PC-3 (cell line): ENCODE measurements at regions of chr2 and their contacts with region 1.

Region 1: GRCh38 chr2:107657049-107657448 is 169.6 kb upstream of the RGPD4 start:
- DNase-seq: no peak
- ATAC-seq: no peak
- H3K4me3 ChIP-seq: no peak overlapping the region
- H3K27ac ChIP-seq: no peak overlapping the region
- H3K4me1 ChIP-seq: no peaks in the 10 kb centered on the region
- H3K27me3 ChIP-seq: no peaks in the 10 kb centered on the region
- CTCF ChIP-seq: no peak

Region 2: DNA sequence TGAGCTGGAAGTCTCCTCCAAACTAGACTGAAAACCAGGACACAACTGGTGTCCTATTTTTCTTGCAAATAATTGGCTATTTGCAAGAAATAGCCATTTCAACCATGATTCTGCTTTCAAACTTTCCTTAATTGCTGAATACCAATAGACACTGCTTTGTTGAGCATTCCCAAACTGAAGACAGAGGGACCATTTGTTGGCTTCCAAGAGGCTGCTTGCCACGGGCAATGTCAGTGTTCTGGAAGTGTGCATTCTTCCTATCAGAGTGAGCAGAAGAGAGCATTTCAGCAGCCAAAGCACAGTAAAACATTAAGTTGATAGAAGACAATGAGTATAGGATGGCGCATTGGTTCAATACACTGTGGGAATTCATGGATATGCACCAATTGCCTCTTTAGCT is 190.8 kb before region 1 on chr2:
- CTCF ChIA-PET with region 1: no interaction called
- POLR2A ChIA-PET with region 1: no interaction called
- intact Hi-C with region 1: no loop called
- DNase-seq: no peak
- ATAC-seq: no peak
- H3K4me3 ChIP-seq: no peak overlapping the region
- H3K27ac ChIP-seq: no peak overlapping the region
- H3K4me1 ChIP-seq: no peaks in the 10 kb centered on the region
- H3K27me3 ChIP-seq: peaks cover 54% of the 10 kb centered on the region
- CTCF ChIP-seq: no peak

Region 3: DNA sequence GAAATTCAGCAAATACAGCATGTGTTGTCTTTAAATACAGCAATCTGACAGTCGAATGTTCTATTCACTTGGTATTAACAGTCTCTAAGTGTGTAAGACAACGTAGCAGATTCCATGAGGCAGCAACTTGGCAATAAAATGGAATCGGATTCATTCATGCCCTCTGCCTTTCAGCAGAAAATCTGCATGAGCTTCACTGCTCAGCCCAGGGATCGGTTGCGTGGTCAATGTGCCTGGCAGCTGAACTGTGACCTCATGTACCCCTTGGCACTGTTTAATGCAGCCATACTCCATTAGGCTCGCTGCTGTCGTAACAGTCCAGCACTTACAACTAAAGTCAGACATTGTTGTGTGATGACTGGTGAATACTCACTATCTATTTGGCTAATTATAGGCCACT is 151.9 kb after region 1 on chr2:
- CTCF ChIA-PET with region 1: no interaction called
- POLR2A ChIA-PET with region 1: no interaction called
- intact Hi-C with region 1: loop called (anchors 10 kb)
- DNase-seq: peak; percentile 44
- ATAC-seq: peak; percentile 31
- H3K4me3 ChIP-seq: no peak overlapping the region
- H3K27ac ChIP-seq: peak overlapping the region; percentile 81
- H3K4me1 ChIP-seq: peaks cover 40% of the 10 kb centered on the region
- H3K27me3 ChIP-seq: no peaks in the 10 kb centered on the region
- CTCF ChIP-seq: no peak